Stomach (tissue), 19 donors: ENCODE measurements at regions of chr22 and their contacts with region 1.

Region 1: GRCh38 chr22:25048659-25049647 is 96.4 kb downstream of the KIAA1671 start:
- DNase-seq: peak; percentile 70 to 87
- H3K4me3 ChIP-seq: no peak overlapping the region
- H3K27ac ChIP-seq: no peak overlapping the region
- H3K4me1 ChIP-seq: peaks cover 0 to 10% (median 3%) of the 10 kb centered on the region in 4 donors
- H3K27me3 ChIP-seq: no peaks in the 10 kb centered on the region
- CTCF ChIP-seq: peak in 6 of 7 experiments; percentile 13 to 91 (median 77)
- EP300 ChIP-seq: no peak
- POLR2A ChIP-seq: no peak

Region 2: DNA sequence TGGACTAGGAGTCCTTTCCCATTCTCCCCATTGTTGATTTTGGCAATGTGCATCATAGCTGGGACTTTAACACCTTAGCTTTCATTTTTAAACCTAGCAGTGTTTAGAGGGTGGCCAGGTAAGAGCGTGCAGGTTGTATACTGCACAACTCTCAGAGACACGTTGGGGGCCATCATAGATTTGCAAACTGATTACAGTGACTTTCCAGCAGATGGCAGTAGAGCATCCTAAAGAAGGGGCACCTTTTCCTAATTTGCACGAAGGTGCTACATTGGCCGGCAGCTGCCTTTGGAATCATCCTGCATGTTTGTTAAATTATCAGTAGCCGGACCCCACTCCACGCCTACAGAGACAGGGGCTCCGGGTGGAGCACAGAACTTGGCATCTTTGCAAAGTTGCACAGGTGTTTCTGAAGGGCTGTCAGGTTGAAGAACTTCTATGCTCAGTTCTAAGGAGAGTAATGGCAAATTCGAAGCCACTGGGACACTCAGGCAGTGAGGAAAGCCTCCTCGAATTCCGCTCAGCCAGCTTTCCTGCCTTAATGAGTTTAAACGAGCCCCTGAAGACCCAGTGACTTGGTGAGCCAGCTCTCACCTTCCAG is 110.1 kb before region 1 on chr22:
- intact Hi-C with region 1: loop called (anchors 5 kb)
- DNase-seq: peak in 1 of 2 donors; percentile 70
- H3K4me3 ChIP-seq: no peak overlapping the region
- H3K27ac ChIP-seq: no peak overlapping the region
- H3K4me1 ChIP-seq: peaks cover 0 to 6% (median 0%) of the 10 kb centered on the region in 4 donors
- H3K27me3 ChIP-seq: peaks cover 0 to 4% (median 0%) of the 10 kb centered on the region in 3 donors
- CTCF ChIP-seq: peak in 5 of 7 experiments; percentile 41 to 65 (median 60)
- EP300 ChIP-seq: no peak
- POLR2A ChIP-seq: no peak

Region 3: DNA sequence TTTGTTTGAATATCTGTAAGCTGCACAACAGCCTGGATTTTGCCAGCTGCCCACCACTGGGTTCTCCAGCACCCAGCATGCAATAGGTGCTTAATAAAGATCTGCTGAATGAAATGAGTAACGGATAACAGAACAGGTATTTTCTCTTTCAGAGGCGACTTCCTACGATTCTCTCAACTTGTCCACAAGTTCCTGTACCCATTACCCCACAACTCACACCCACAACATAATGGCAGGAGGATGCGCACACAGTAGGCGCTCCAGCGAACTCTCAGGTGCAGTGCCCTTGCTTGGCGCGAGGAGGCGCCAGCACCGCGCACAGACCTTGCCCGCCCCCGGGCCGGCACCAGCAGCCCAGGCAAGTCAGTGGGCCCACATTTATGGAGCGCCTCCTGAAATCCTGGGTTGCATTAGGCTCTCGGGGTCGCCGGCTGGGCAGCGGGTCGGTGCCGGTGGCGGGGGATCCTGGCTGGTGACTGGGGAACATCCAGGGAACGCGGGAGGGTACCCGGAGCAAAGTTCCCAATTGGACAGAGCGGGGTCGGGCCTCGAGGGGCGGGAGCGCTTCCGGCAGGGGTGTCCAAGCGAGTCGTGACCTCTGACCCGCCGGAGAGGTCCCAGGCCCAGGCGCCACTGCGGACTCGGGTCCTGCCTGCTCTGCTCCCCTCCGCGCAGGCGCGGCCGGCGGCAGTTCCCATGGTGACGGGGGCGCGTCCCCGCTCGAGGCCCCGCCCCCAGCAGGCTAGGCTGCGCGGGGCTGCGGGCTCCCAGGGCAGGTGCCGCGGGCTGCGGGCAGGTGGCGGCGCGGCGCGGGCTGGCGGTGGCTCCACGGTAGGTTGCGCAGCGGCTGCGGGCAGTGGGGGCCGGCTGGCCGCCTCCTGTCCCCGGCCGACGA is 96.8 kb before region 1 on chr22 and contains the start of gene KIAA1671:
- intact Hi-C with region 1: loop called (anchors 5 kb)
- DNase-seq: peak; percentile 91 to 96
- H3K4me3 ChIP-seq: peak within 1 kb of the TSS; percentile 73 to 79 (median 76)
- H3K27ac ChIP-seq: peak within 1 kb of the TSS; percentile 86 to 92 (median 88)
- H3K4me1 ChIP-seq: peaks cover 19 to 38% (median 28%) of the 10 kb centered on the region in 4 donors
- H3K27me3 ChIP-seq: peaks cover 0 to 61% (median 12%) of the 10 kb centered on the region in 3 donors
- CTCF ChIP-seq: peak in 5 of 7 experiments; percentile 91 to 96 (median 92)
- EP300 ChIP-seq: no peak
- POLR2A ChIP-seq: no peak
- total RNA-seq, gene KIAA1671: 30.8 to 80.5 (median 43.8) TPM

Region 4: GRCh38 chr22:25081409-25081824 is 32.5 kb after region 1 on chr22:
- intact Hi-C with region 1: no loop called
- DNase-seq: peak; percentile 57 to 70
- H3K4me3 ChIP-seq: no peak overlapping the region
- H3K27ac ChIP-seq: no peak overlapping the region
- H3K4me1 ChIP-seq: peaks cover 10 to 29% (median 17%) of the 10 kb centered on the region in 4 donors
- H3K27me3 ChIP-seq: no peaks in the 10 kb centered on the region
- CTCF ChIP-seq: peak in 5 of 7 experiments; percentile 34 to 67 (median 55)
- EP300 ChIP-seq: no peak
- POLR2A ChIP-seq: no peak